Activated CD4-positive, alpha-beta T cell treated with anti-CD3 and anti-CD28 coated beads for 36 hours (primary cell): ENCODE measurements at regions of chr14 and their contacts with region 1.

Region 1: GRCh38 chr14:97707603-97708002 is 910.4 kb downstream of the VRK1 start:
- DNase-seq: peak; percentile 39
- ATAC-seq: peak; percentile 32
- H3K4me3 Mint-ChIP-seq: no peak overlapping the region
- H3K27ac Mint-ChIP-seq: no peak overlapping the region
- H3K4me1 Mint-ChIP-seq: peaks cover 96% of the 10 kb centered on the region
- H3K27me3 Mint-ChIP-seq: no peaks in the 10 kb centered on the region

Region 2: GRCh38 chr14:97380539-97380941 is 327.1 kb before region 1 on chr14:
- CTCF ChIA-PET with region 1: no interaction called
- POLR2A ChIA-PET with region 1: no interaction called
- intact Hi-C with region 1: loop called in 1 of 2 experiments (anchors 5 kb)
- DNase-seq: peak; percentile 88
- ATAC-seq: peak; percentile 99
- H3K4me3 Mint-ChIP-seq: no peak overlapping the region
- H3K27ac Mint-ChIP-seq: no peak overlapping the region
- H3K4me1 Mint-ChIP-seq: peaks cover 46% of the 10 kb centered on the region
- H3K27me3 Mint-ChIP-seq: no peaks in the 10 kb centered on the region